Activated CD8-positive, alpha-beta T cell treated with anti-CD3 and anti-CD28 coated beads for 36 hours (primary cell): ENCODE measurements at regions of chr10 and their contacts with region 1.

Region 1: GRCh38 chr10:5873515-5873995 is 16.1 kb downstream of the ANKRD16 start:
- DNase-seq: peak; percentile 80
- ATAC-seq: peak; percentile 98
- H3K4me3 Mint-ChIP-seq: peak overlapping the region; percentile 6
- H3K27ac Mint-ChIP-seq: peak overlapping the region; percentile 21
- H3K4me1 Mint-ChIP-seq: peaks cover 6% of the 10 kb centered on the region
- H3K27me3 Mint-ChIP-seq: no peaks in the 10 kb centered on the region
- CTCF ChIP-seq: peak; percentile 73

Region 2: DNA sequence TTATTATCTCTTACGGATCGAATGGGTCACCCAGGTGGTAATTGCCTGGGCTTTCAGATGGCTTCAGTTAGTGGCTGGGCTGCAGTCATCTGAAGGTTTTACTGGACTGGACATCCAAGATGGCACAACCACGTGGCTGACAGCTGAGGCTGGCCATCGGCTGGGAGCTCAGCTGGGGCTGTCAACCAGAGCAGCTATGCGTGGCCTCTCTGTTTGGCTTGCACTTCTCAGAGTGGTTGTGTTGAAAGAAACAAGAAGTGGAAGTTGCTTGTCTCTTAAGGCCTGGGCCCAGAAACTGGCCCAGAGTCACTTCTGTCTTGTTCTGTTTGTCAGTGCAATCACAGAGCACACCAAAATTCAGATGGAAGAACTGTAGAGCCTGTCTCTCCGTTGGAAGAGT is 54.7 kb before region 1 on chr10:
- CTCF ChIA-PET with region 1: interaction called, 18 read pairs
- POLR2A ChIA-PET with region 1: interaction called, 4 read pairs
- intact Hi-C with region 1: loop called (anchors 5 kb)
- DNase-seq: no peak
- ATAC-seq: no peak
- H3K4me3 Mint-ChIP-seq: no peak overlapping the region
- H3K27ac Mint-ChIP-seq: no peak overlapping the region
- H3K4me1 Mint-ChIP-seq: peaks cover 45% of the 10 kb centered on the region
- H3K27me3 Mint-ChIP-seq: no peaks in the 10 kb centered on the region
- CTCF ChIP-seq: no peak

Region 3: DNA sequence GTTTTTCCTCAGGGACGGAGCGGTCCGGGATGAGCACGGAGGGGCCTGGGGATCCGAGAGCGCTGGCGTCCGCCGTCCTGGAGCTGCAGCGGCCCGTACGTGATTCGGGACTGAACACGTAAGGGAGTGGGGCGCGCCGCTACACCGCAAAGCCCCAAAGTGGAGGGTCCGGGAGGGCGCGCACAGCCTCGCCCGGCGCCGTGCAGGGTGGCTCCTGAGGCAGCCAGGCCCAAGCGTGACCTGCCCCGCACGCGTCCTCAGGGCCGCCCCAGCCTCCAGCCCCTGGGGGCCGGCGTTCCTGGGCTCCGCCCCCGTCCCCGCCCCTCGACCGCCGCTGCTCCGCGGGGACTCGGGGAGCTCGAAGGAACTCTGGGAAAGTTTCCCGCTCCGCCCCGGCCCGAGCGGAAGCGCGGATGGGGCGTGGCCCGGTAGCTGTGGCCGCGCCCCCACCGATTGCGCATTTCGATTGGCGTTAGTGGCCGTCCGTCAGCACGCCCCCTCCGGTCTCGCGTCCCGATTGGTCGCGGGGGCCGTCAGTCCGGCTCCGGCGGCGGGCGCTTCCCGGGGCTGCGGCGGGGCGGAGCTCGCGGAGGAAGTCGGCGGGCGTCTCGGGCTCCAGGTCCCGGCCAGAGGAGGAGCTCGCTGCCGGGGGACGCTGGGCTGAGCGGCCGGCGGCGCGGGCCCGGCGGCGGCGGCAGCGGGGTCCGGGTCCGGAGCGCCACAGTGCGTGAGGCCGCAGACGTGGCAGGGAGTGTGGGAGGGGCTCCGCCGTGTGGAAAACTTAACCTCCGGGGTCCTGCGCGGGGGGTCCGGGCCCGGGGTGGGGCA is 16.3 kb after region 1 on chr10 and contains the starts of genes ANKRD16 and FBH1:
- CTCF ChIA-PET with region 1: interaction called, 11 read pairs
- POLR2A ChIA-PET with region 1: interaction called, 4 read pairs
- intact Hi-C with region 1: no loop called
- DNase-seq: peak; percentile 97
- ATAC-seq: peak; percentile 91
- H3K4me3 Mint-ChIP-seq: peak within 1 kb of the TSS; percentile 92
- H3K27ac Mint-ChIP-seq: peak within 1 kb of the TSS; percentile 76
- H3K4me1 Mint-ChIP-seq: peaks cover 48% of the 10 kb centered on the region
- H3K27me3 Mint-ChIP-seq: no peaks in the 10 kb centered on the region
- CTCF ChIP-seq: no peak
- total RNA-seq, gene ANKRD16: 7.5 to 7.8 TPM
- total RNA-seq, gene FBH1: 47.2 to 51.3 TPM